ENCODE measurements at regions of chr1 and their contacts with region 1.

Region 1: DNA sequence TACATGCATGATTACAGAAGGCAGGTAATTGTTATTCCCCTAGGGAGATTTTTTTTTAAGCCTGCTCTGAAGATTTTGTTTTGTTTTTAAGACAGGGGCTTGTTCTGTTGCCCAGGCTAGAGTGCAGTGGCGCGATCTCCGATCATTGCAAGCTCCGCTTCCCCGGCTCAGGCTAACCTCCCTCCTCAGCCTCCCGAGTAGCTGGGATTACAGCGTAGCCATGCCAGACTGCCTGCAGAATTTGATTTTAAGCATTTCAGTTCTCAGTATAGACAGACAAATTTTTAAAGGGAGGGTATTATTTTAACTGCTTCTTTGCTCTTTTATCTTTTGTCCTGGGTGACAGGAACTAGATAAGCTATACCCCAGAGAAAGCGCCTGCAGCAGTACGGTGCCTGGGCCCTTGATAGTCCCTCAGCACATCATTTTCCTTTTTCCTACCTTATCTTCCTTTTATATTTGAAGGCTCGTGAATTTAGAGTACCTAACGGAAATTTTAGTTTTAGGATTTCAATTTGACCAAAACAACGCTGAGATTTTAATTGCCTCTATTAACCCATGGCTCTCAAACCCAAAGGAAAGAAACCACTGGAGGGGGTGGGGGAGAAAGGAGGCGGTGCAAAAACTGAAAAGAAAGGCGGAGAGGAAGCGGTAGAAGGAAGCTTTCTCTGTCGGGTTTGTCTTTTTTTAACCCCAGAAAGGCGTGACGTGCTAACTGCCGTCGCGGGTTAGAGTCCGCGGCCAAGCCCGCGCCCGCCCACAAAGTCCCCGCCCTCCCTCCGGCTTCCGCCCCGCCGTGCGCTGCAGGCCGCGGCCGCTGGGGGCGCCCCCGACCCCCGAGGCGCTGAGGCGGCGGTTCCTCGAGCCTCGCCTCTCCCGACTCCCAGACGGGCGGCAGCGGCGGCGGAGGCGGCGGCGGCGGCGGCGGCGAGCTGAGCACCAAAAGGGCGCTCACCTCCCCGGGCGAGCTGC is at the start of gene EEIG2:
- DNase-seq: peak; percentile 96
- ATAC-seq: peak; percentile 80
- H3K4me3 Mint-ChIP-seq: peak within 1 kb of the TSS; percentile 96
- H3K27ac Mint-ChIP-seq: peak within 1 kb of the TSS; percentile 91
- H3K4me1 Mint-ChIP-seq: peaks cover 23% of the 10 kb centered on the region
- H3K27me3 Mint-ChIP-seq: no peaks in the 10 kb centered on the region
- total RNA-seq, gene EEIG2: 16.5 TPM

Region 2: GRCh38 chr1:108504447-108504846 is 55.1 kb before region 1 on chr1:
- POLR2A ChIA-PET with region 1: interaction called, 12 read pairs
- DNase-seq: no peak
- ATAC-seq: peak; percentile 40
- H3K4me3 Mint-ChIP-seq: no peak overlapping the region
- H3K27ac Mint-ChIP-seq: no peak overlapping the region
- H3K4me1 Mint-ChIP-seq: peaks cover 4% of the 10 kb centered on the region
- H3K27me3 Mint-ChIP-seq: peaks cover 41% of the 10 kb centered on the region

Region 3: GRCh38 chr1:108512239-108512981 is 47.1 kb before region 1 on chr1:
- POLR2A ChIA-PET with region 1: interaction called, 10 read pairs
- DNase-seq: no peak
- ATAC-seq: no peak
- H3K4me3 Mint-ChIP-seq: no peak overlapping the region
- H3K27ac Mint-ChIP-seq: no peak overlapping the region
- H3K4me1 Mint-ChIP-seq: peaks cover 1% of the 10 kb centered on the region
- H3K27me3 Mint-ChIP-seq: peaks cover 32% of the 10 kb centered on the region

Region 4: GRCh38 chr1:108524676-108525075 is 34.8 kb before region 1 on chr1:
- POLR2A ChIA-PET with region 1: no interaction called
- DNase-seq: no peak
- ATAC-seq: no peak
- H3K4me3 Mint-ChIP-seq: no peak overlapping the region
- H3K27ac Mint-ChIP-seq: no peak overlapping the region
- H3K4me1 Mint-ChIP-seq: no peaks in the 10 kb centered on the region
- H3K27me3 Mint-ChIP-seq: peaks cover 12% of the 10 kb centered on the region

Region 5: GRCh38 chr1:108600504-108600903 is 41.0 kb after region 1 on chr1:
- POLR2A ChIA-PET with region 1: no interaction called
- DNase-seq: no peak
- ATAC-seq: no peak
- H3K4me3 Mint-ChIP-seq: no peak overlapping the region
- H3K27ac Mint-ChIP-seq: no peak overlapping the region
- H3K4me1 Mint-ChIP-seq: peaks cover 3% of the 10 kb centered on the region
- H3K27me3 Mint-ChIP-seq: no peaks in the 10 kb centered on the region

Region 6: DNA sequence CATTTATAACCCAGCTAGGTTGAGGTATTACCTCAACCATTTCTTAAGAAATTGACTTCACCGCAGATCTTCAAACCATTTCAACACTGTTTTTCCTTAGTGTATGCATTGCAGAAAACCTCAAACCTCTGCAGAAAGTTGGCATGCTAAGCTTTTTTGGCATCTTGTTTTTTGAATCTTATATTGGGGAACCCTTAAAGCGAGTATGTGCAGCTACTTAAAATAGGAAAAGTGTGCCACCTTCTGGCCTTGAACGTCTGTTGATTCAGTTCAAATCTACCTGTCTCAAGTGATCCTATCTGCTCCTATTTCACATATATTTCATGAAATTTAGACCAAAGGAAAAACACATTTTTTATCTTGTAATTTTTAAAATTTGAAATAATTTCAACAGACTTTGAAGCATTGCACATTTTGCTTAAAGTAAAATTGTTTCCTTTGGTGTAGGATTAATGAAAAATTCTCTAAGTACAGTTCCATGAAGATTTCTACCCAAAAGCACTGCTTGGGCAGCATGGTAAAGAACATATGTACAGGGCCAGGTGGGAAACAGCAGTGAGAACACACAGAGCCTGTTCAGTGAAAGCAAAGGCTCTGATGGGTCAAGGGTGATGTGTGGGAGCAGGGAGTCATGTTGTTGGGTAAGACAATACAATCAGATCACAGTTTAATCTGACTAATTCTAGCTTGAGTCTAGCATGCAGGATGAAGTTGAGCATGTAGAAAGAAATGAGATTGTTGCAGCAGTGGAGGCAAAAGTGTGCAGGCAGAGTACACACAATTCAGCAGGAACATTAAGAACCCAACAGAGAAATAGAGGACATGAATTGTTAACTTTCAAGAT is 84.2 kb after region 1 on chr1:
- POLR2A ChIA-PET with region 1: interaction called, 71 read pairs
- DNase-seq: no peak
- ATAC-seq: no peak
- H3K4me3 Mint-ChIP-seq: peak overlapping the region; percentile 20
- H3K27ac Mint-ChIP-seq: peak overlapping the region; percentile 97
- H3K4me1 Mint-ChIP-seq: peaks cover 65% of the 10 kb centered on the region
- H3K27me3 Mint-ChIP-seq: no peaks in the 10 kb centered on the region

Region 7: GRCh38 chr1:108661030-108661620 is 101.6 kb after region 1 on chr1 and contains the start of gene HENMT1:
- POLR2A ChIA-PET with region 1: interaction called, 21 read pairs
- DNase-seq: peak; percentile 87
- ATAC-seq: peak; percentile 82
- H3K4me3 Mint-ChIP-seq: peak within 1 kb of the TSS; percentile 86
- H3K27ac Mint-ChIP-seq: peak within 1 kb of the TSS; percentile 96
- H3K4me1 Mint-ChIP-seq: peaks cover 31% of the 10 kb centered on the region
- H3K27me3 Mint-ChIP-seq: no peaks in the 10 kb centered on the region
- total RNA-seq, gene HENMT1: 32.3 to 33.0 TPM